ENCODE measurements at regions of chr10 and their contacts with region 1.

Region 1: DNA sequence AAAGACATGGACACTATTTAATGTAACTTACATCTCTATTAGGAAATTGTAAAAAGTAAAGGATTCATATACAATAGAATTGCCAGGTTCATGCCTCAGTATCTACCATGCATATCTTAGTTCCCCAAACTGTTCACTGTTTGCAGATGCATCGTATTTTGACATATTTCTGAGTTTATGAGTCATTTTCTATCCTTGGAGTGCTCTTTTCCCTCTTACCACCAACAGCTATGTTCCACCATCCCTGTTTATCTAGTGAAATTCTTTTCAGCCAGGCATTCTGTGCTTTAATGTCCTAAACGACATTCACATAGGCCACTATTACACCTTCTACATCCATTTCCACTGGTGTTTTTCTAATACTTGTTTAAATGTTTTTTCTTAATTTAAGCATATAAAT is 139.4 kb upstream of the HPS1 start:
- DNase-seq: no peak
- ATAC-seq: no peak
- H3K4me3 ChIP-seq: no peak overlapping the region
- H3K27ac ChIP-seq: no peak overlapping the region
- H3K4me1 ChIP-seq: no peaks in the 10 kb centered on the region
- H3K27me3 ChIP-seq: 0 out of 2 replicates have a peak, but pooled peaks cover 3% of the 10 kb centered on the region
- CTCF ChIP-seq: no peak

Region 2: DNA sequence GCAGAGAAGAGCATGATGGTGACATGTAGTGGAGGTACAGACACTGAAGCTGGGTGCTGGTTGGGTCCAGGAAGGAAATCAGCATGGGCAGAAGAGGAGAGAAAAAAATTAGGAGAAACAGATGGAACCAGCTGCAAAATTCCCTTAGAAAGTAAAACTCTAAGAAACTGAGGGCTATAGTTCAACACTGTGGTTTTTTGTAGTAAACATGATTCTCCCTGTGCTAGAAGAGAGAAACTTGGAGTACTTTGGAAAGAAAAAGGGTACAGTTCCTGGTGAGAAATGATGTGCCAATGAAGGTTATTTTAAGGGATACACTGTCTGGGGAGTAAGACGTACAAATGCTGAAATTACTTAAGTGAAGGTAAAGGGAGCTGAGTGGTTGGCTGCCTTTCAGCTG is 42.1 kb after region 1 on chr10:
- CTCF ChIA-PET with region 1: no interaction called
- POLR2A ChIA-PET with region 1: no interaction called
- in situ Hi-C with region 1: no loop called
- intact Hi-C with region 1: no loop called
- DNase-seq: no peak
- ATAC-seq: no peak
- H3K4me3 ChIP-seq: no peak overlapping the region
- H3K27ac ChIP-seq: no peak overlapping the region
- H3K4me1 ChIP-seq: no peaks in the 10 kb centered on the region
- H3K27me3 ChIP-seq: no peaks in the 10 kb centered on the region
- CTCF ChIP-seq: no peak

Region 3: DNA sequence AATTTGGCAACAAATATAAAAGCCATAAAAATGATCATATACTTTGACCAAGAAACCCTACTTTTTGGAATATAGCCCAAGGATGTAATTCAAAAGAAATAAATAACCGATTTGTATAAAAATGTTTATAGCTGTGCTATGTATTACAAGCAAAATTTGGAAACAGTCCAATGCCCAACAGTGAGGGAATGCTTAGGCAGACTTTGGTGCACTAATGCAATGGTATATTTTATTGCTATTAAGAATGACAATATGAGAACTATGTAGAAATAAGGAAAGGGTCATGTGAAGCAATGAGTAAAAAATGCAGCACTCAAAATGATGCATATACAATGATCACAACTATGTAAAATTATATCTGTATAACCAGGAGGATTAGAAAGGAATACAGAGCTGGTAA is 134.5 kb after region 1 on chr10:
- CTCF ChIA-PET with region 1: no interaction called
- POLR2A ChIA-PET with region 1: no interaction called
- in situ Hi-C with region 1: no loop called
- intact Hi-C with region 1: no loop called
- DNase-seq: no peak
- ATAC-seq: no peak
- H3K4me3 ChIP-seq: no peak overlapping the region
- H3K27ac ChIP-seq: no peak overlapping the region
- H3K4me1 ChIP-seq: no peaks in the 10 kb centered on the region
- H3K27me3 ChIP-seq: no peaks in the 10 kb centered on the region
- CTCF ChIP-seq: no peak

Region 4: GRCh38 chr10:98748298-98748697 is 162.2 kb after region 1 on chr10:
- CTCF ChIA-PET with region 1: interaction called, 11 read pairs
- POLR2A ChIA-PET with region 1: no interaction called
- in situ Hi-C with region 1: no loop called
- intact Hi-C with region 1: no loop called
- DNase-seq: peak; percentile 8
- ATAC-seq: no peak
- H3K4me3 ChIP-seq: no peak overlapping the region
- H3K27ac ChIP-seq: no peak overlapping the region
- H3K4me1 ChIP-seq: no peaks in the 10 kb centered on the region
- H3K27me3 ChIP-seq: no peaks in the 10 kb centered on the region
- CTCF ChIP-seq: peak; percentile 59

Region 5: GRCh38 chr10:98790802-98791201 is 204.7 kb after region 1 on chr10:
- CTCF ChIA-PET with region 1: no interaction called
- POLR2A ChIA-PET with region 1: no interaction called
- in situ Hi-C with region 1: no loop called
- intact Hi-C with region 1: no loop called
- DNase-seq: no peak
- ATAC-seq: no peak
- H3K4me3 ChIP-seq: no peak overlapping the region
- H3K27ac ChIP-seq: no peak overlapping the region
- H3K4me1 ChIP-seq: no peaks in the 10 kb centered on the region
- H3K27me3 ChIP-seq: peaks cover 6% of the 10 kb centered on the region
- CTCF ChIP-seq: peak; percentile 55; the same call in 1 of the 2 replicates